ENCODE measurements at regions of chr6 and their contacts with region 1.

Region 1: GRCh38 chr6:106085984-106086813 is at the start of gene PRDM1:
- DNase-seq: peak; percentile 72
- ATAC-seq: peak; percentile 20
- H3K4me3 ChIP-seq: peak within 1 kb of the TSS; percentile 85
- H3K27ac ChIP-seq: peak within 1 kb of the TSS; percentile 75
- H3K4me1 ChIP-seq: peaks cover 20% of the 10 kb centered on the region
- H3K27me3 ChIP-seq: no peaks in the 10 kb centered on the region
- CTCF ChIP-seq: 0 out of 2 replicates have a peak, but pooled peaks have one; percentile 15
- POLR2A ChIP-seq: peak; percentile 48; the same call in 1 of the 2 replicates
- RAD21 ChIP-seq: peak; percentile 42
- total RNA-seq, gene PRDM1: 2.3 and 6.9 TPM in 2 replicates

Region 2: GRCh38 chr6:105608711-105609374 is 477.4 kb before region 1 on chr6:
- CTCF ChIA-PET with region 1: no interaction called
- POLR2A ChIA-PET with region 1: interaction called, 3 read pairs
- dilution Hi-C with region 1: no loop called
- in situ Hi-C with region 1: no loop called
- intact Hi-C with region 1: loop called (anchors 2 kb)
- DNase-seq: peak; percentile 97
- ATAC-seq: peak; percentile 77
- H3K4me3 ChIP-seq: no peak overlapping the region
- H3K27ac ChIP-seq: peak overlapping the region; percentile 92
- H3K4me1 ChIP-seq: peaks cover 20% of the 10 kb centered on the region
- H3K27me3 ChIP-seq: no peaks in the 10 kb centered on the region
- CTCF ChIP-seq: no peak
- POLR2A ChIP-seq: peak; percentile 55; the same call in 1 of the 2 replicates
- RAD21 ChIP-seq: peak; percentile 2; the same call in 1 of the 2 replicates

Region 3: DNA sequence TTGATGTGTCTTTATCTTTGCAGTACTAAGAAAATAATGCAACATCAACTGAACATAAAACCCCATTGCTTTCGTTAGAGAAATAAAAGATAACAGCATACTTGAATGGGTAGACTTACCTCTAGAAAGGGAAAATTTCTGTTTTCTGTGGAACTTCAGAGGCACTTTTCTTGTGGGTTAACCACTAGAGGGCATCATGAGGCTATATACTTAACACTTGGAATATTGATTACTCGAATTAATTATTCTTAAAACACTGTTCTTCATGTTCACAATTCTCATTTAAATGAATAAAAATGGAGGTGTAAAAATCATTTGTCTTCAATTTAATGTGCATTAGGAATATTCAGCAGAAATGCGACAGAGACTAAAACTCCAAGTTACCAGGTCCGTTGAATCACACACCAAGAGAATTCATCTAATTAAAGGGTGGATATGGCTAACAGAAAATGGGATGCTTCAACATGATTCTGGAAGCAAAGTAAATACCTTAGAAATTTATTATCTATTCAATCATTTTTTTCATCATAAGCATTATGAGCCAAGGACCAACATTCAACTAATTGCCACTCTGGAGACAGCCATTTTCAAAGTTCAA is 352.5 kb before region 1 on chr6:
- CTCF ChIA-PET with region 1: no interaction called
- POLR2A ChIA-PET with region 1: no interaction called
- dilution Hi-C with region 1: no loop called
- in situ Hi-C with region 1: no loop called
- intact Hi-C with region 1: loop called (anchors 2 kb)
- DNase-seq: peak; percentile 60
- ATAC-seq: peak; percentile 44; the same call in 1 of the 2 replicates
- H3K4me3 ChIP-seq: no peak overlapping the region
- H3K27ac ChIP-seq: no peak overlapping the region
- H3K4me1 ChIP-seq: no peaks in the 10 kb centered on the region
- H3K27me3 ChIP-seq: no peaks in the 10 kb centered on the region
- CTCF ChIP-seq: peak; percentile 65
- POLR2A ChIP-seq: no peak
- RAD21 ChIP-seq: peak; percentile 73

Region 4: GRCh38 chr6:105909106-105909505 is 177.1 kb before region 1 on chr6:
- CTCF ChIA-PET with region 1: no interaction called
- POLR2A ChIA-PET with region 1: no interaction called
- dilution Hi-C with region 1: no loop called
- in situ Hi-C with region 1: no loop called
- intact Hi-C with region 1: no loop called
- DNase-seq: no peak
- ATAC-seq: no peak
- H3K4me3 ChIP-seq: no peak overlapping the region
- H3K27ac ChIP-seq: no peak overlapping the region
- H3K4me1 ChIP-seq: no peaks in the 10 kb centered on the region
- H3K27me3 ChIP-seq: no peaks in the 10 kb centered on the region
- CTCF ChIP-seq: no peak
- POLR2A ChIP-seq: no peak
- RAD21 ChIP-seq: no peak

Region 5: GRCh38 chr6:105992315-105992961 is 93.8 kb before region 1 on chr6:
- CTCF ChIA-PET with region 1: interaction called, 3 read pairs
- POLR2A ChIA-PET with region 1: interaction called, 7 read pairs
- dilution Hi-C with region 1: no loop called
- in situ Hi-C with region 1: no loop called
- intact Hi-C with region 1: loop called (anchors 1 kb)
- DNase-seq: peak; percentile 72
- ATAC-seq: peak; percentile 79
- H3K4me3 ChIP-seq: peak overlapping the region; percentile 72
- H3K27ac ChIP-seq: peak overlapping the region; percentile 64; the same call in 1 of the 2 replicates
- H3K4me1 ChIP-seq: peaks cover 3% of the 10 kb centered on the region
- H3K27me3 ChIP-seq: no peaks in the 10 kb centered on the region
- CTCF ChIP-seq: no peak
- POLR2A ChIP-seq: no peak; the same call in 1 of the 2 replicates
- RAD21 ChIP-seq: no peak

Region 6: DNA sequence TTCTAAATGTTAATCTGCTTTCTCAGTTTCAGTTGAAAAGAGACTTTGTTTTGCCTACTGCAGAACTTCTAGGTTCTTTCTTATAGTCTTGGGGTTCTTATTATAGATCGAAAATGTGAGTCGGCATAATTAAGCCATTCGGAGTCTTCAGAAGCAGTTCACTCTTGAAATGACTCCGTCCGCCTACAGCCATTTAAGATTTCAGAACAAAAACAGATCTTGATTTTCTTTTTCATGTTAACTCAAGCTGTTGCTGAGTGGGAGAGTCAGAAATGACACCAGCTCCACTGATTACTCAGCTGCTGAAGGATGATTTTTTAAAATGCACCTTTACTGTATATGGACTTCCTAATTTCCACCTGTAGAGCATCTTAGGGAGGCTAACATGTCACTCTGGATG is 15.8 kb after region 1 on chr6:
- CTCF ChIA-PET with region 1: no interaction called
- POLR2A ChIA-PET with region 1: no interaction called
- dilution Hi-C with region 1: no loop called
- in situ Hi-C with region 1: no loop called
- intact Hi-C with region 1: no loop called
- DNase-seq: no peak
- ATAC-seq: no peak
- H3K4me3 ChIP-seq: no peak overlapping the region
- H3K27ac ChIP-seq: no peak overlapping the region
- H3K4me1 ChIP-seq: peaks cover 7% of the 10 kb centered on the region
- H3K27me3 ChIP-seq: no peaks in the 10 kb centered on the region
- CTCF ChIP-seq: no peak
- POLR2A ChIP-seq: no peak
- RAD21 ChIP-seq: no peak

Region 7: GRCh38 chr6:106223300-106223930 is 137.2 kb after region 1 on chr6:
- CTCF ChIA-PET with region 1: interaction called, 13 read pairs
- POLR2A ChIA-PET with region 1: interaction called, 3 read pairs
- dilution Hi-C with region 1: no loop called
- in situ Hi-C with region 1: no loop called
- intact Hi-C with region 1: loop called (anchors 1 kb)
- DNase-seq: peak; percentile 79
- ATAC-seq: peak; percentile 68
- H3K4me3 ChIP-seq: no peak overlapping the region
- H3K27ac ChIP-seq: no peak overlapping the region
- H3K4me1 ChIP-seq: no peaks in the 10 kb centered on the region
- H3K27me3 ChIP-seq: no peaks in the 10 kb centered on the region
- CTCF ChIP-seq: peak; percentile 80
- POLR2A ChIP-seq: 0 out of 2 replicates have a peak, but pooled peaks have one; percentile 36
- RAD21 ChIP-seq: peak; percentile 93

Region 8: DNA sequence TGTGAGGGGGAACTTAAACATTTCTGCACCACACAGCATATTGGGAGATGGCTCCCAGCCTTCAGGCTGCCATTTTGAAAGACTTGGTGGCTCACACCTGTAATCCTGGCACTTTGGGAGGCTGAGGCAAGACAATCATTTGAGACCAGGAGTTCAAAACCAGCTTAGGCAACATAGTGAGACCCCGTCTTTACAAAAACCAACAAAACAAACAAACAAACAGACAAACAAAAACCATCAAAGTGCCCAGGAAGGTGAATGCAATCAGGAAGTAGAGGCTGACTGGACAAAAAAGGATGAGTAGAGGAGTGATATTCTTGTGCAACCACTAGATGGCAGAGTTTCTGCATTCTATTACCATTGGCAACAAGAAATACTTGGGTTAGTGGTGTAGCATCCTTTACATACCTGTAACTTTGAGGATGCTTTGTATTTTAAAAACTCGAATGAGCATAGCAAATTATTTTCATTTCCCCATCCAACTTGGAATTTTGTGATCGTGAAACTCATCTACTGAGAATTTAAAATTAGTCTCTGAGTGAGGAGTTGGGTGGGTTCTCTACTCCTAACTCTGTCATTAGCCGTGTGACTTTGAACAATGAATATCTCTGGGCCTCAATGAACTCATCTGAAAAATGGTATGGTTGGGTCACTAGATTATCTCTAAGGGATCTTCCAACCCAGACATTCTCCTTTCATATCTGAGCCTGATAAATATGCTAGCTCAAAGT is 358.7 kb after region 1 on chr6:
- CTCF ChIA-PET with region 1: no interaction called
- POLR2A ChIA-PET with region 1: no interaction called
- dilution Hi-C with region 1: no loop called
- in situ Hi-C with region 1: no loop called
- intact Hi-C with region 1: loop called (anchors 2 kb)
- DNase-seq: peak; percentile 69
- ATAC-seq: peak; percentile 75; the same call in 1 of the 2 replicates
- H3K4me3 ChIP-seq: no peak overlapping the region
- H3K27ac ChIP-seq: no peak overlapping the region
- H3K4me1 ChIP-seq: no peaks in the 10 kb centered on the region
- H3K27me3 ChIP-seq: peaks cover 18% of the 10 kb centered on the region
- CTCF ChIP-seq: peak; percentile 73
- POLR2A ChIP-seq: no peak
- RAD21 ChIP-seq: peak; percentile 78

Measured in IMR-90 (cell line).